MCF 10A (cell line): ENCODE measurements at regions of chr2 and their contacts with region 1.

Region 1: GRCh38 chr2:50401772-50402653 is 629.9 kb downstream of the NRXN1 start:
- DNase-seq: peak; percentile 63
- H3K4me3 Mint-ChIP-seq: no peak overlapping the region
- H3K27ac Mint-ChIP-seq: no peak overlapping the region
- H3K4me1 Mint-ChIP-seq: no peaks in the 10 kb centered on the region
- H3K27me3 Mint-ChIP-seq: peaks cover 31% of the 10 kb centered on the region
- CTCF ChIP-seq: peak; percentile 89

Region 2: GRCh38 chr2:48600204-48600813 is 1801.7 kb before region 1 on chr2:
- CTCF ChIA-PET with region 1: interaction called, 3 read pairs
- POLR2A ChIA-PET with region 1: no interaction called
- intact Hi-C with region 1: loop called (anchors 5 kb)
- DNase-seq: peak; percentile 57
- H3K4me3 Mint-ChIP-seq: no peak overlapping the region
- H3K27ac Mint-ChIP-seq: no peak overlapping the region
- H3K4me1 Mint-ChIP-seq: no peaks in the 10 kb centered on the region
- H3K27me3 Mint-ChIP-seq: no peaks in the 10 kb centered on the region
- CTCF ChIP-seq: peak; percentile 79

Region 3: DNA sequence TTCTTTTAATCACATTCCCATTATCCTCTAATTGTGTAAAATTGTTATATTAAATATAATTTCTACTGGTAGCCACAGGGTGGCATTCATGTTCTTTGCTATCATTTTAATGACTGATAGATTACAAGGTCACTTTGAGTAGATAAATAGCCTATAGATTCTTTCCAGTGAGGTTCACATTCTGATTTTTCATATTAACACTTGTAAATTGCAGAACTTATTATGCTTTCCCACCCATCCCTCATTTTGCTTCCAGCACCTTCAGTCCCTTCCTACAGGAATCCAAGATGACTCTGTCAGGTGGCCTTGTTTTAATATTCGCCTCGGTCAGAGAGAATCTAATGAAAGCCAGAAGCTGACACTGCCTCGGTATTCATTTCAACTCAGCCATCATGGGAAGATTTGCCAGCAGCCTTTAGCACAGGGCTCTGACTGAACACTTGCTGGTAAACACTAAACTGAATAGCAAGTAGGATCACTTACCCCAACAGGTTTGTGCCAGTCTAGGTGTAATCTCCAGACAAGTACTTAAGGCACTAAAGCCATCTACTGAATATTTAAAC is 1146.5 kb before region 1 on chr2:
- CTCF ChIA-PET with region 1: interaction called, 3 read pairs
- POLR2A ChIA-PET with region 1: no interaction called
- intact Hi-C with region 1: loop called (anchors 10 kb)
- DNase-seq: no peak
- H3K4me3 Mint-ChIP-seq: no peak overlapping the region
- H3K27ac Mint-ChIP-seq: no peak overlapping the region
- H3K4me1 Mint-ChIP-seq: peaks cover 5% of the 10 kb centered on the region
- H3K27me3 Mint-ChIP-seq: peaks cover 9% of the 10 kb centered on the region
- CTCF ChIP-seq: peak; percentile 28

Region 4: GRCh38 chr2:49687918-49688317 is 714.1 kb before region 1 on chr2:
- CTCF ChIA-PET with region 1: interaction called, 14 read pairs
- POLR2A ChIA-PET with region 1: interaction called, 3 read pairs
- intact Hi-C with region 1: loop called (anchors 1 kb)
- DNase-seq: no peak
- H3K4me3 Mint-ChIP-seq: no peak overlapping the region
- H3K27ac Mint-ChIP-seq: no peak overlapping the region
- H3K4me1 Mint-ChIP-seq: no peaks in the 10 kb centered on the region
- H3K27me3 Mint-ChIP-seq: peaks cover 22% of the 10 kb centered on the region
- CTCF ChIP-seq: peak; percentile 39

Region 5: GRCh38 chr2:50026236-50026635 is 375.8 kb before region 1 on chr2:
- CTCF ChIA-PET with region 1: no interaction called
- POLR2A ChIA-PET with region 1: no interaction called
- intact Hi-C with region 1: no loop called
- DNase-seq: no peak
- H3K4me3 Mint-ChIP-seq: no peak overlapping the region
- H3K27ac Mint-ChIP-seq: no peak overlapping the region
- H3K4me1 Mint-ChIP-seq: no peaks in the 10 kb centered on the region
- H3K27me3 Mint-ChIP-seq: peaks cover 9% of the 10 kb centered on the region
- CTCF ChIP-seq: no peak

Region 6: DNA sequence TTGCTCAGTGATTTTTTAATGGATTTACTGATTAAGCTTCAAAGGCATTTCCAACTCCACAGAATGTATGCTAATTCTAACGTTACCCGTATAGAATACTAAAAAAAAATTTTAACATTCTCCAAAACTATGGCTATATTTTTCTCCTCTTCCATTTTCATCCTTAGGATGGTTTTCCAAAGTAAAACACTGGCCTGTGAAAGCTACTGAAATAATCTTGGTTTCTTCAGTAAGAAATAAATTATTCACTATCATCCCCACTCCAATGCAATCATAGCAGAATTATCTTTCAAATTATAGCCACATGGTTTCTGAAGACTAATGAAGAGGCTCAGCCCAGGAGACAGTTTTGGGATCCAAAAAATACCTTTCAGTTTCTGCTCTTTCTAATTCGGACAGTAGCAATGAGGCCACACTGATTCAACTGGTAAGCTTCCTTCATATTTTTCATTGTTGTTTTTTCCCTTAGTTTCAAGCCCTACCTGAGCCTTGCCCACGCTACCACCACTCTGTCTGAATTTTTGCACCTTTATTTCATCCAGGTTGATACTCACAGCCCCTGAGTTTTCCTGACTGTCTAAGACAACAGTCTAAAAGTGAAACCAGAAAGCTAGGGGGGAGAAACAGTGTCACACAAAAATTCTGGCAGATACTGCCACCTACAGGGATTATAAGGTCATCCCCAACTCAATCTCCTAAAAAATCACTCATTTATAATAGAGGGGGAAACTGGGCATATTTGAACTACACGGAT is 258.0 kb before region 1 on chr2:
- CTCF ChIA-PET with region 1: interaction called, 10 read pairs
- POLR2A ChIA-PET with region 1: no interaction called
- intact Hi-C with region 1: loop called (anchors 10 kb)
- DNase-seq: peak; percentile 63
- H3K4me3 Mint-ChIP-seq: peak overlapping the region; percentile 69
- H3K27ac Mint-ChIP-seq: peak overlapping the region; percentile 68
- H3K4me1 Mint-ChIP-seq: peaks cover 18% of the 10 kb centered on the region
- H3K27me3 Mint-ChIP-seq: peaks cover 15% of the 10 kb centered on the region
- CTCF ChIP-seq: peak; percentile 51

Region 7: GRCh38 chr2:51304311-51304710 is 902.3 kb after region 1 on chr2:
- CTCF ChIA-PET with region 1: no interaction called
- POLR2A ChIA-PET with region 1: no interaction called
- intact Hi-C with region 1: no loop called
- DNase-seq: no peak
- H3K4me3 Mint-ChIP-seq: no peak overlapping the region
- H3K27ac Mint-ChIP-seq: no peak overlapping the region
- H3K4me1 Mint-ChIP-seq: no peaks in the 10 kb centered on the region
- H3K27me3 Mint-ChIP-seq: no peaks in the 10 kb centered on the region
- CTCF ChIP-seq: no peak